OCI-LY7 (cell line): ENCODE measurements at regions of chr4 and their contacts with region 1.

Region 1: GRCh38 chr4:143346206-143346605 is 9.5 kb downstream of the GAB1 start:
- DNase-seq: no peak
- H3K4me3 ChIP-seq: no peak overlapping the region
- H3K27ac ChIP-seq: no peak overlapping the region
- H3K4me1 ChIP-seq: peaks cover 10% of the 10 kb centered on the region
- CTCF ChIP-seq: no peak

Region 2: DNA sequence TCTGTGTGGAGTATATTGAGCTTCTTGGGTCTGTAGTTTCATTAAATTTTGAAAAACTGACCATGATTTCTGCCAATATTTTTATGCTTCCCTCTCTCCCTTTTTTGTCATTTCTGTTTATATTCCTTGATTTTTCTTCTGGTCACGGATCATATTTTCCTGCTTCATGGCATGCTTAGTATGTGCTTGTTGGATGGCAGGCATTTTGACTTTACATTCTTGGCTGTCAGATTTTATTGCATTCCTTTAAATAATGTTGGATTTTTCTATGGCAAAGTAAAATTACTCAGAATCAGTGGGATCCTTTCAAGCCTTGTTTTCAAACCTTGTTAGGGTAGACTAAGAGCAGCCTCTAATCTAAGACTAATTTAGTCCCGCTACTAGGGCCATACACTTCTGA is 1178.0 kb before region 1 on chr4:
- CTCF ChIA-PET with region 1: no interaction called
- POLR2A ChIA-PET with region 1: no interaction called
- intact Hi-C with region 1: no loop called
- DNase-seq: no peak
- H3K4me3 ChIP-seq: no peak overlapping the region
- H3K27ac ChIP-seq: no peak overlapping the region
- H3K4me1 ChIP-seq: no peaks in the 10 kb centered on the region
- CTCF ChIP-seq: no peak

Region 3: DNA sequence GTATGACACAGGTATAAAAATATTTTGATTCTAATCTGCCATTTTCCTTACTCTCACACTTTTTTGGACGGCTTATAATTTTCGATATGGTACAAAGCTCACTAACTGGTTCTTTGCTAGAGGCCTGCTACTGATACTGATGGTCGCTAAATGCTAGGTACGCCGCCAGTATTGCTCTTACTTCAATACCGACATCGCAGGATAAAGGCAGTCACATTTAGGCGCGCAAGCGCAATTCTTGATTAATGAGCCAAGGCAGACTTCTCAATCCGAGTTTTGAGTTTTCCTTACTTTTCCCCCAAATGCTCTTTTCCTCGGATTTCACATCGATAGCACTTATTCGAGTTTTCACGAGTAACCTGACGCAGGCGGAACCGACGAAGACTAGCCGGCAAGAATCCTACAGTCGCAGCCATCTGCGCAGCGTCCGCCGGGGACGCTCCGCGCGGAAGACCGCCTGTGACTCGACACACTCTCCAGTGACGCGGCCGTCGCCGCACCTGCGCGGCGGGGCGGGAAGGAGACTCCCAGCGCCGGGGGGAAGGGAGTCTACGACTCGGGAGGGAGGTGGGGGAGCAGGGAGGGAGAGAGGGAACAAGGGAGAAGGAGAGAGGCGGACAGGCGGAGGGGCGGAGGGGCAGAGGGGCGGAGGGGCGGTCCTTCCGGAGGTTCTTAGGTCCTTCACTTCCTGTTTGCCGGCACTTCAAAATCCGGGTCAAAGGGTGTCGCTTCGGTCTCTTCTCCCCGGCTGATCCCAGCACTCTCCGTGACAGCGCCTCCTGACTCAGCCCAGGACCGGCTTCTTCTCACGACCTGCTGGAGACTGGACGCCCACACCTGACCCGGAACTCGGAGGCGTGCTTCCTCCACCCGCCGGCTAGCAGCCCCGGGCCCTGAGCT is 161.7 kb before region 1 on chr4 and contains the start of gene USP38:
- CTCF ChIA-PET with region 1: no interaction called
- POLR2A ChIA-PET with region 1: no interaction called
- intact Hi-C with region 1: no loop called
- DNase-seq: peak; percentile 90
- H3K4me3 ChIP-seq: peak within 1 kb of the TSS; percentile 94
- H3K27ac ChIP-seq: peak within 1 kb of the TSS; percentile 75
- H3K4me1 ChIP-seq: peaks cover 29% of the 10 kb centered on the region
- CTCF ChIP-seq: 0 out of 2 replicates have a peak, but pooled peaks have one; percentile 46
- total RNA-seq, gene USP38: 21.8 and 23.6 TPM in 2 replicates

Region 4: DNA sequence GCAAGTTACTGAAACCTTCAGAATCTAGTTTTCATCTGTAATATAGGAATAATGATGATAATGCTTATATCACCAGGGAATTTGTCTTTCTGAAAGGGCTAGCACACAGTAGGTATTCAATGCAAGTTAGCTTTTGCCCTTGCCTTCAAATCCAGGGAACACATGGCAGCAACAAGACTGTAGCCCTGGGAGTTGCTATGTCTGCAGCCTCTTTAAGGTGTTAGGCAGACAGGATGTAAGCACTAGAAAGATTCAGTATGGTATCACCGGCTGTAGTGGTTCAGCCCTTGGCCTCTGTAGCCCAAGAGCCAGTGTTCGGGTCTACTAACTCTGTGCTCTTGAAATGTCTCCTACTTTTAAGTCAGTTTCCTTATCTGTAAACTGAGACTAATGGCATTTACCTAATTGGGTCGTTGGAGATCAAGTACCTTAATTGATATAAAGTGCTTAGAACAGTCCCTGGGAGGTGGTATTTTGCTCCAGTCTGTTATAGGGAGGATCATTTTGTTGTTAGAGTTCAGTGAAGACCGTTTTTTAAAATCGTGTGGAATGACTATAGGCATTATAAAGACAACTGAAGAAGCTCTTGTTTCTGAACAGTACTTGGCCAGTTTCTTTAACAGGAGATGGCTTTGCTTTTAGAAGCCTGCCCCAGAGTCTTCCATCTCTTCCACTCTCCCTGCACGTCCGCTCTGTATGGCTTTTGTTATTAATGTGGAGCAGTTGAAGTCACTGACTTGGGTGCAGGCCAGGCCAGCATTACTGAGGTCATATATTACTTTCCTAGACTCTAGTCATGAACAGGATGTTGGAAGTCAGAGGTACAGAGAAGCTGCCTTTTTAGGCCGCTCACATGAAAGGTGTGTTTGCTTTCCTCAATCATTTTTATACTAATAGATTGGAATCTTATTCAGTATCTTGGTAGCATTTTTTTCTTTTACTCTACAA is 35.2 kb after region 1 on chr4:
- CTCF ChIA-PET with region 1: no interaction called
- POLR2A ChIA-PET with region 1: interaction called, 14 read pairs
- intact Hi-C with region 1: no loop called
- DNase-seq: peak; percentile 80
- H3K4me3 ChIP-seq: peak overlapping the region; percentile 18
- H3K27ac ChIP-seq: peak overlapping the region; percentile 81
- H3K4me1 ChIP-seq: peaks cover 100% of the 10 kb centered on the region
- CTCF ChIP-seq: no peak

Region 5: DNA sequence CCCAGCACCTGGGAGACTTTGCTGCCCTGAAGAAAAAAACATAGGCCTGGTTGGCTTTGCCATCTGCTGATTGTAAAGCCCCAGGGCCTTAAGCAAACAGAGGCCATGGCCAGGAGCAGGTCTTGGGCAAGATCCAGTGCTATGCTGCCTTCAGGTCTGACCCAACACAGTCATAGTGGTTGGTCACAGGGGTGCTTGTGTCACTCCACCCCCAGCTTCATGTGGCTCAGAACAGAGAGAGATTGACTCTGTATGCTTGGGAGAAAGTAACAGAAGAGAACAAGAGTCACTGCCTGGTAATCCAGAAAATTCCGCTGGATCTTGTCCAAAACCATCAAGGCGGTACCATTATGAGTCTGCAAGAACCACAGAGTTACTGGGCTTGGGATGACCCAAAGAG is 142.9 kb after region 1 on chr4:
- CTCF ChIA-PET with region 1: no interaction called
- POLR2A ChIA-PET with region 1: no interaction called
- intact Hi-C with region 1: no loop called
- DNase-seq: no peak
- H3K4me3 ChIP-seq: no peak overlapping the region
- H3K27ac ChIP-seq: no peak overlapping the region
- H3K4me1 ChIP-seq: no peaks in the 10 kb centered on the region
- CTCF ChIP-seq: no peak